Activated CD8-positive, alpha-beta T cell treated with anti-CD3 and anti-CD28 coated beads for 36 hours (primary cell): ENCODE measurements at regions of chr15 and their contacts with region 1.

Region 1: GRCh38 chr15:99282121-99282520 is 30.8 kb downstream of the LRRC28 start:
- DNase-seq: no peak
- ATAC-seq: no peak
- H3K4me3 Mint-ChIP-seq: no peak overlapping the region
- H3K27ac Mint-ChIP-seq: no peak overlapping the region
- H3K4me1 Mint-ChIP-seq: peaks cover 42% of the 10 kb centered on the region
- H3K27me3 Mint-ChIP-seq: no peaks in the 10 kb centered on the region
- CTCF ChIP-seq: no peak

Region 2: GRCh38 chr15:99250494-99251435 is 31.4 kb before region 1 on chr15:
- CTCF ChIA-PET with region 1: no interaction called
- POLR2A ChIA-PET with region 1: no interaction called
- intact Hi-C with region 1: no loop called
- DNase-seq: peak; percentile 99
- ATAC-seq: peak; percentile 99
- H3K4me3 Mint-ChIP-seq: no peak overlapping the region
- H3K27ac Mint-ChIP-seq: peak overlapping the region; percentile 92
- H3K4me1 Mint-ChIP-seq: peaks cover 26% of the 10 kb centered on the region
- H3K27me3 Mint-ChIP-seq: no peaks in the 10 kb centered on the region
- CTCF ChIP-seq: no peak

Region 3: GRCh38 chr15:99345832-99346462 is 63.8 kb after region 1 on chr15:
- CTCF ChIA-PET with region 1: no interaction called
- POLR2A ChIA-PET with region 1: no interaction called
- intact Hi-C with region 1: no loop called
- DNase-seq: no peak
- ATAC-seq: no peak
- H3K4me3 Mint-ChIP-seq: no peak overlapping the region
- H3K27ac Mint-ChIP-seq: no peak overlapping the region
- H3K4me1 Mint-ChIP-seq: peaks cover 10% of the 10 kb centered on the region
- H3K27me3 Mint-ChIP-seq: no peaks in the 10 kb centered on the region
- CTCF ChIP-seq: no peak

Region 4: DNA sequence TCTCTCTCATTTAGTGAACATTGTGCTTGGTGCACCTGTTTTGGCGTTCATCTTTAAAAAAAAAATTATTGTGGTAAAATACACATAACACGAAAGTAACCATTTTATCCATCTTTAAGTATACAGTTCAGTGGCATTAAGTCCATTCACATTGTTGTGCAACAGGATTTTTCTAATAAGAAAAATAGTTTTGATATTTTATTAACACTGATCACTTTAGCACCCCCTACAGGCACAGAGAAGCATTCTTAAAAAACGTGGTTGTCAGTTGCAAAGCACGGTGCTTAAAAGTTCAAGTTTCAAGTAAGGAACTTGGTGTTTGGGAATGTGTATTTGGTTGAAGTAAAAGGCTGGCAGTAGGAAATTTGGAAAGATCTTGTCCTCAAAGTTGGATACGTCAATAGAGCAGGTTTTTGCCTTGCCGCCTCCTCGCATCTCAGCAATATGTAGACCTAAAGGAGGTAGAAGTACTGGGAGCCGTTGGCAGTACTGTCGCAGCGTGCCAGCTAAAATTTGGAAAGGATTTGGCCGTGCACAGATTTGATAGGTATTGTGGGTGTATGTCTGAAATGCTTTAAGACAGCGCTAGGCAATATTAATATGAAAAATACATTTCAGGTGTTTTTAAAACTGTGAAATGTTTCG is 79.5 kb after region 1 on chr15:
- CTCF ChIA-PET with region 1: interaction called, 10 read pairs
- POLR2A ChIA-PET with region 1: no interaction called
- intact Hi-C with region 1: no loop called
- DNase-seq: no peak
- ATAC-seq: no peak
- H3K4me3 Mint-ChIP-seq: no peak overlapping the region
- H3K27ac Mint-ChIP-seq: no peak overlapping the region
- H3K4me1 Mint-ChIP-seq: peaks cover 7% of the 10 kb centered on the region
- H3K27me3 Mint-ChIP-seq: no peaks in the 10 kb centered on the region
- CTCF ChIP-seq: peak; percentile 67